ENCODE measurements at regions of chr6 and their contacts with region 1.

Region 1: DNA sequence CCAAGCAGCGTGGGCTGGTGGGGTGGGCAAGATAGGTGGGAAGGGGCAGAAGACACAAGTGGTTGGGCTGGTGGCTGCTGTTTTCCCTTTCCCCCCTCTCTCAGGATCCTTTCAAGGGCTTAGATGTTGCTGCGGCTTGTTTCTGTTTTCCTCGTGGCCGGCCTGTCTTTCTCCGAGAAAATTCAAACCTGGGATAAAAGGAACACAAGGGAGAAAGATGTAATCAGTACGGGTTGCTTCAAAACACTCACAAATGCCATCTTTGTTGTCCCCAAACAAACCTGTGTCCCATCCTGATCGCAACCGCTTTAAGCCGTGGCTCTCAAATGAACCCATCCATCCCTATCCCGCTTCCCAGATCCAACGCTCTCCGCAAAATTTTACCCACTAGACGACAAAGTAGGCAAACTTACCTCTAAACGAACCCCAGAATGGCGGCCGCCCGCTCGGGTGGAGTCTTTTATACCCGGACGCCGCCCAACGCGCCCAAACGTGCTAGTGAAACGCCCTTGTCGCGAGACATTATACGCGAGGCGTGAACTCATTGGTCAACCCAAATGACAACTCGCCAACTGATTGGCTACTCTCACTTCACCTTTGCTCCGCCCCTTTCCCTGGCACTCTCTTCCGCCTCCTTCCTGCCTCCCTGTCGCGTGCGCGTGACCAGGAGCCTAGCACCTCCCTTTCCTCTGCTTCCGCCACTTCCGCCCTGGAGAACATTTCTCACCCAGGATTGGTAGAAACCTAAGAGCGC is at the start of gene PPP1R10:
- DNase-seq: peak; percentile 100
- H3K4me3 ChIP-seq: peak within 1 kb of the TSS; percentile 83 to 100 (median 90)
- H3K4me3 Mint-ChIP-seq: peak within 1 kb of the TSS; percentile 99 to 100
- H3K27ac ChIP-seq: peak within 1 kb of the TSS; percentile 91 to 99
- H3K27ac Mint-ChIP-seq: peak within 1 kb of the TSS; percentile 99 to 100 (median 99)
- H3K4me1 ChIP-seq: peaks cover 27 to 39% of the 10 kb centered on the region in 2 donors
- H3K4me1 Mint-ChIP-seq: peaks cover 31% of the 10 kb centered on the region
- H3K27me3 ChIP-seq: no peaks in the 10 kb centered on the region
- H3K27me3 Mint-ChIP-seq: peaks cover 0 to 5% (median 1%) of the 10 kb centered on the region in 3 donors
- CTCF ChIP-seq: no peak
- polyA plus RNA-seq, gene PPP1R10: 9.5 to 18.3 (median 16.4) TPM

Region 2: GRCh38 chr6:30489081-30490025 is 127.6 kb before region 1 on chr6 and contains the start of gene HLA-E:
- intact Hi-C with region 1: loop called (anchors 5 kb)
- DNase-seq: peak; percentile 99 to 100 (median 100)
- H3K4me3 ChIP-seq: peak within 1 kb of the TSS; percentile 64 to 99 (median 88)
- H3K4me3 Mint-ChIP-seq: peak within 1 kb of the TSS; percentile 97 to 99
- H3K27ac ChIP-seq: peak within 1 kb of the TSS; percentile 91 to 95
- H3K27ac Mint-ChIP-seq: peak within 1 kb of the TSS; percentile 94 to 98 (median 97)
- H3K4me1 ChIP-seq: peaks cover 42 to 47% of the 10 kb centered on the region in 2 donors
- H3K4me1 Mint-ChIP-seq: peaks cover 51% of the 10 kb centered on the region
- H3K27me3 ChIP-seq: no peaks in the 10 kb centered on the region
- H3K27me3 Mint-ChIP-seq: peaks cover 2 to 12% (median 7%) of the 10 kb centered on the region in 3 donors
- CTCF ChIP-seq: no peak
- polyA plus RNA-seq, gene HLA-E: 870 to 944 (median 893) TPM

Region 3: DNA sequence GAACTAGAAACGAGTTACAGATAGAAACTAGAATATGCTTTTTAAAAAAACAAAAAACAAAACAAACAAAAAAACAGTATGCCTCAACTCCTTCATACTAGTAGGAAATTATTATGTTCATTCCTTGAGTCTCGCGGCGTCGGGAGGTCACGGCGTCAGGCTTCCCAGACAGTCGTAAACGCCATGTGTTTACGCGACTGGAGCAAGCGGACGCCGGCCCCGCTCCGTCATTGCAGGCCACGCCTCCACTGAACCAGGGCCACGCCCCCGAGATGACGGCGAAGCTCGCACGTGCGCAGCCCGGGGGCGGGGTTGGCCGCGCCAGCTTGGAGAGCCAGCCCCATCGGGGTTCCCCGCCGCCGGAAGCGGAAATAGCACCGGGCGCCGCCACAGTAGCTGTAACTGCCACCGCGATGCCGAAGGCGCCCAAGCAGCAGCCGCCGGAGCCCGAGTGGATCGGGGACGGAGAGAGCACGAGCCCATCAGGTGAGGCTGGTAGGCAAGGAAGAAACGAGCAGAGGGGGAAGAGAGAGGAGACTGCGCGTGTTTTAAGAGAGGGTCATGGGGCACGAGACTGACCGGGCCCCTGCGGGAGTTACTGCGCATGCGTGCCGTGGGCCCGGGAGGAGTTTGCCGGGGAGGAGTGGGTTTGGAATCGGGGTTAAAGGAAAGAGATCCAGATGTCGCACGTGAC is 45.8 kb before region 1 on chr6 and contains the start of gene ABCF1:
- intact Hi-C with region 1: loop called (anchors 2 to 5 kb)
- DNase-seq: peak; percentile 95 to 98 (median 98)
- H3K4me3 ChIP-seq: peak within 1 kb of the TSS; percentile 76 to 87 (median 79)
- H3K4me3 Mint-ChIP-seq: peak within 1 kb of the TSS; percentile 96 to 99
- H3K27ac ChIP-seq: peak within 1 kb of the TSS; percentile 93 to 97
- H3K27ac Mint-ChIP-seq: peak within 1 kb of the TSS; percentile 98 to 100 (median 99)
- H3K4me1 ChIP-seq: peaks cover 23 to 33% of the 10 kb centered on the region in 2 donors
- H3K4me1 Mint-ChIP-seq: peaks cover 40% of the 10 kb centered on the region
- H3K27me3 ChIP-seq: no peaks in the 10 kb centered on the region
- H3K27me3 Mint-ChIP-seq: peaks cover 1 to 5% (median 3%) of the 10 kb centered on the region in 3 donors
- CTCF ChIP-seq: no peak
- polyA plus RNA-seq, gene ABCF1: 7.5 to 19.8 (median 14.6) TPM

Region 4: GRCh38 chr6:30672445-30673253 is 55.7 kb after region 1 on chr6 and contains the start of gene DHX16:
- intact Hi-C with region 1: loop called in 1 of 2 experiments (anchors 2 kb)
- DNase-seq: peak; percentile 93 to 94 (median 94)
- H3K4me3 ChIP-seq: peak within 1 kb of the TSS; percentile 70 to 97 (median 96)
- H3K4me3 Mint-ChIP-seq: peak within 1 kb of the TSS; percentile 91 to 95
- H3K27ac ChIP-seq: peak within 1 kb of the TSS in 1 of 2 donors; percentile 74
- H3K27ac Mint-ChIP-seq: peak within 1 kb of the TSS; percentile 63 to 87 (median 77)
- H3K4me1 ChIP-seq: peaks cover 11 to 23% of the 10 kb centered on the region in 2 donors
- H3K4me1 Mint-ChIP-seq: peaks cover 33% of the 10 kb centered on the region
- H3K27me3 ChIP-seq: no peaks in the 10 kb centered on the region
- H3K27me3 Mint-ChIP-seq: no peaks in the 10 kb centered on the region
- CTCF ChIP-seq: peak; percentile 75
- polyA plus RNA-seq, gene DHX16: 16.4 to 70.1 (median 19.0) TPM

Region 5: DNA sequence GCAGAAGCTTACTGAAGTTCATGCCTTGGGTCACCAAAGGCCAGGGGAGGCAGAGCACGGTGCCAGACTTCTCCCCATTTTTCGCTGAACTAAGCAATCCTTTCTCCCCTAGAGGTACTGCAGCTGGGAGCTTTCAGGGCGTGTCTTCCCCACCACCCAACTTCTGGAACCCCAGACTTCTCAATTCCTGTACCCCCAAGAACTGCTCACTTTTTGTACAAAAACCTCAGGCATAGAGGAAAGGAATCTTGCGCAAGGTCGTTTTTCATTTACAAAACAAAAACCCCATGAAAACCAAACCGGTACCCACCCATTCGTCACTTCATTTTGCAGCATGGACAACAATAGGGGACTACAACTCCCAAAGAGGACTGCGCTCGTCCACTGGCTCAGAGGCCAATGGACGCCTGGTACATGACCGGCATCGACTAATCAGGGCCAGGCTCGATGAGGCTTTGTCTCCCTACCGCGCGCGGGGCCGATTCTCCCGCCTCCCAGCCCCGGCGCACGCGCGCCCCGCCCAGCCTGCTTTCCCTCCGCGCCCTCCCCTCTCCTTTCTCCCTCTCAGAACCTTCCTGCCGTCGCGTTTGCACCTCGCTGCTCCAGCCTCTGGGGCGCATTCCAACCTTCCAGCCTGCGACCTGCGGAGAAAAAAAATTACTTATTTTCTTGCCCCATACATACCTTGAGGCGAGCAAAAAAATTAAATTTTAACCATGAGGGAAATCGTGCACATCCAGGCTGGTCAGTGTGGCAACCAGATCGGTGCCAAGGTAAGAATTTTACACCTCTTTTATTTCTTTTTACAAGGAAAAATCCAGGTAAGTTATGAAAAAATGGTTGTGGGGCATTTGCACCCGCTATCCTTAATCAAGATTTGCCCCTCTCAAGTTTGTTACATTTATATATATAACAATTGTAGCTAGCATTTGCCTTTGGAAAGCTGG is 103.1 kb after region 1 on chr6 and contains the start of gene TUBB:
- intact Hi-C with region 1: loop called (anchors 2 to 5 kb)
- DNase-seq: peak; percentile 96 to 98 (median 96)
- H3K4me3 ChIP-seq: peak within 1 kb of the TSS; percentile 89 to 99 (median 99)
- H3K4me3 Mint-ChIP-seq: peak within 1 kb of the TSS; percentile 97 to 98
- H3K27ac ChIP-seq: peak within 1 kb of the TSS; percentile 78 to 85
- H3K27ac Mint-ChIP-seq: peak within 1 kb of the TSS; percentile 90 to 99 (median 97)
- H3K4me1 ChIP-seq: peaks cover 48 to 67% of the 10 kb centered on the region in 2 donors
- H3K4me1 Mint-ChIP-seq: peaks cover 51% of the 10 kb centered on the region
- H3K27me3 ChIP-seq: no peaks in the 10 kb centered on the region
- H3K27me3 Mint-ChIP-seq: no peaks in the 10 kb centered on the region
- CTCF ChIP-seq: no peak
- polyA plus RNA-seq, gene TUBB: 48.4 to 130 (median 57.0) TPM

Region 6: DNA sequence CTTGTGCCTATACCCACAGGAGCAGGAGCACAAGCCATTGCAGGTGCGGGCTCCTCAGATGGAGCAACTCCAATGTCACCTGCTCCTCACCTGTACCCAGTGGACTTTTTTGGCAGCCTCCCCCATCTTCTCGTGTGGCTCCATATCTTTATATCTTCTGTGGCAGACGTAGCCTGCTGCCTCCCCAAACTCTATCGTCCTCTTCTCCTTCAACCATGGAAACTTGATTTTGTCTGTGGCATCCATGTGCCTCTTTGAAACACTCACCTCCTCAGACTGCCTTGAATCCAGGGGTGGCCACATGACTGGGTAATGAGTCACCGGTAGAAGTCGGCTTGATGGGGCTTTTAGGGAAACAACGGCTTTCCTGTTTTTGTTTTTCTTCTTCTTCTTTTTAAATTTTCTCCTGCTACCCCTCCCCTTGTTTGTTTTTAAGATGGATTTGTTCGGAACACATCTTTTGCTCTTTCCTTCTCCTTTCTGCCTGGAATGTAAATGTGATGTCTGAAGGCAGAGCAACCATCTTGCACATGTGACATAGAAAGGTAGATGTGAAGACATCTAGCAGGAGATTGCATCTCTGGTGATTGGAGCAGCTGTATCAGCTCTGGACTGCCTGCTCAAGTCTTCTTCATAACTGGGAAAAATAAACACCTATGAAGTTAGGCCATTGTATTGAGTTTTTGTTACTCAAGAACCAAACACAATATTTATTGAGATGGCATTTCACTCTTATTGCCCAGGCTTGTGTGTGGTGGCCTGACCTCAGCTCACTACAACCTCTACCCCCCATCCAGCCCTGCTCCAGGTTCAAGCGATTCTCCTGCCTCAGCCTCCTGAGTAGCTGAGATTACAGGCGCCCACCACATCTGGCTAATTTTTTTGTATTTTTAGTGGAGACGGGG is 197.4 kb after region 1 on chr6:
- intact Hi-C with region 1: no loop called
- DNase-seq: peak; percentile 82 to 95 (median 91)
- H3K4me3 ChIP-seq: peak overlapping the region in 1 of 3 experiments; percentile 21
- H3K4me3 Mint-ChIP-seq: peak overlapping the region in 1 of 2 donors; percentile 75
- H3K27ac ChIP-seq: peak overlapping the region; percentile 86 to 90
- H3K27ac Mint-ChIP-seq: peak overlapping the region; percentile 90 to 98 (median 96)
- H3K4me1 ChIP-seq: peaks cover 62 to 71% of the 10 kb centered on the region in 2 donors
- H3K4me1 Mint-ChIP-seq: peaks cover 73% of the 10 kb centered on the region
- H3K27me3 ChIP-seq: no peaks in the 10 kb centered on the region
- H3K27me3 Mint-ChIP-seq: peaks cover 0 to 6% (median 0%) of the 10 kb centered on the region in 3 donors
- CTCF ChIP-seq: no peak